Endothelial cell of umbilical vein (primary cell): ENCODE measurements at regions of chr1 and their contacts with region 1.

Region 1: DNA sequence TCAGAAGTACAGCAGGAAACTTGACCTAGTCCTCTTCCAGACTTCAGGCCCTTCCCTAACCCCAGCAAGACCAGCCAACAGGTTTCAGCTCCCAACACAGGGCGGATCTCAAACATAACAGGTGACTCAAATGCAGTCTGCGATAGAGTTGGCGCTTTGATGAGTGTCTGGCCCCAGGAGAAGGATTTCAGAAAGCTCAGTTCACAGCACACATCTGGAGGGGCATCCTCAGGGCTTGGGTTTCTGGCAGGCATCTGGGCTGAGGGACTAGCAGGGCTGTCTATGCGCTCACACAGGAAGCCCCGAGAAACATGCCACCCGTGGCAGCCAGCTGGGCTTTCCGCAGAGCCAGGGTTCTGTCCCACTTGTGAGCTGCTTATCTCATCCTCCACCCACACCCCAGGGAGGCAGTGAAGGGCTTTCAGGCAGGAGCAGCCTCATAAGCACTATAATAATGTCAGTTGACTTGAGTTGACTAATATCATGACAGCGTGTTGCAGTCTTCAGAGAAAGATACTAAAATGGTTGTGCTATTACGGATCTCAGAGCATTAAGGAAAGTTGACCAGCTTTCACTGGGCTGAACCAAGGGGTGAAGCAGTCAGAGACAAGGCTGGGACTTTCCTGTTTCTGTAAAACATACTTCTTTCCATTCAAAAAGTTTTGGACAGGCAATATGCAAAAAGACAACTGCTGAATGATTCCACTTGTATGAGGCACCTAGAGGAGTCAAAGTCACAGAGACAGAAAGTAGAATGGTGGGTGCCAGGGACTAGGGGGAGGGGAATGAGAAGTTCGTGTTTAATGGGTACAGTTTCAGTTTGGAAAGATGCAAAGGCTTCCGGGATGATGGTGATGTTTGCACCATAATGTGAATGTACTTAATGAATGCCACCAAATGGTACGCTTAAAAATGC is 233.0 kb upstream of the IRF2BP2 start:
- DNase-seq: no peak
- H3K4me3 ChIP-seq: no peak overlapping the region
- H3K27ac ChIP-seq: no peak overlapping the region
- H3K4me1 ChIP-seq: peaks cover 17% of the 10 kb centered on the region
- H3K27me3 ChIP-seq: no peaks in the 10 kb centered on the region
- CTCF ChIP-seq: no peak
- POLR2A ChIP-seq: no peak

Region 2: GRCh38 chr1:234599617-234600417 is 243.2 kb before region 1 on chr1:
- CTCF ChIA-PET with region 1: interaction called, 3 read pairs
- POLR2A ChIA-PET with region 1: no interaction called
- dilution Hi-C with region 1: no loop called
- intact Hi-C with region 1: loop called (anchors 2 kb)
- DNase-seq: peak; percentile 92
- H3K4me3 ChIP-seq: peak overlapping the region; percentile 18 to 53 (median 32)
- H3K27ac ChIP-seq: peak overlapping the region; percentile 87
- H3K4me1 ChIP-seq: peaks cover 50% of the 10 kb centered on the region
- H3K27me3 ChIP-seq: no peaks in the 10 kb centered on the region
- CTCF ChIP-seq: peak in 1 of 2 donors; percentile 3
- POLR2A ChIP-seq: no peak

Region 3: DNA sequence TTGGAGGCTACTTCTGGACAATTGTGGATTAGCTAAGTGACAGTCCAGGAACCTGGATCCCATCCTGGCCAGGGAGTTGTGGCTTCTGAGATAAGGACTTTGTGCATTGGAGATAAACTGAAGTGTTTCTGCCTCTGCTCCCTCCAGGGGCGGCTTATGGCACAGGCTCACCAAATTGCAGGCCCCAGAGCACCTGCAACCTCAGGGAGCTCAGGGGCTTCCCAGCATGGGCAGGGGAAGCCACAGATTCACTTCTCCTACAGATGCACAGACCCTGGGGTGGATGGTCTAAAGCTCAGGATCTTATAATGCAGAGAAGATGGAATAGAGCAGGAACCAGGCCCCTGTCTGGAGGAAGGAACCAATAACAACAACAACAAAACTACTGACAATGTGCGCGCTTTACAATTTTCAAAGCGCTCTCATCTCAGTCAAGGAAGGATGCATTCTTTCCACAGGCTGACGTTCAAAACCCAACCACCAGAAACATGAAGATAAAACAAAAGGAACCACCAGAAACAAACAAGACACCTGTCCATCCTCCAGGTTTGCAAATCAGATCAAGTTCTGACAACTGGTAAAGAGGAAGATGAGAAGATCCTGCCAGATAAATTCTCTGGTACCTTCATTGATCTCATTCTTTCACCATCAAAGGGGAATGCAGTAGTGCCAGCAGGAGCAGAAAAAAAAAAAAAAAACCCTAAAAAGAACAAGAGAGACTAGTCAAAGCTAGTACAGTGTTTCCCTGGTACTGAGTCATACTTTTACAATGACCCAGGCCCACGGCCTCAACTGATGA is 112.0 kb before region 1 on chr1:
- CTCF ChIA-PET with region 1: no interaction called
- POLR2A ChIA-PET with region 1: no interaction called
- dilution Hi-C with region 1: loop called (anchors 25 kb)
- intact Hi-C with region 1: no loop called
- DNase-seq: no peak
- H3K4me3 ChIP-seq: no peak overlapping the region
- H3K27ac ChIP-seq: no peak overlapping the region
- H3K4me1 ChIP-seq: peaks cover 24% of the 10 kb centered on the region
- H3K27me3 ChIP-seq: no peaks in the 10 kb centered on the region
- CTCF ChIP-seq: no peak
- POLR2A ChIP-seq: no peak

Region 4: GRCh38 chr1:234823191-234824176 is 19.5 kb before region 1 on chr1:
- CTCF ChIA-PET with region 1: no interaction called
- POLR2A ChIA-PET with region 1: no interaction called
- dilution Hi-C with region 1: no loop called
- intact Hi-C with region 1: no loop called
- DNase-seq: no peak
- H3K4me3 ChIP-seq: no peak overlapping the region
- H3K27ac ChIP-seq: no peak overlapping the region
- H3K4me1 ChIP-seq: no peaks in the 10 kb centered on the region
- H3K27me3 ChIP-seq: peaks cover 6 to 8% of the 10 kb centered on the region in 2 experiments
- CTCF ChIP-seq: no peak
- POLR2A ChIP-seq: no peak

Region 5: DNA sequence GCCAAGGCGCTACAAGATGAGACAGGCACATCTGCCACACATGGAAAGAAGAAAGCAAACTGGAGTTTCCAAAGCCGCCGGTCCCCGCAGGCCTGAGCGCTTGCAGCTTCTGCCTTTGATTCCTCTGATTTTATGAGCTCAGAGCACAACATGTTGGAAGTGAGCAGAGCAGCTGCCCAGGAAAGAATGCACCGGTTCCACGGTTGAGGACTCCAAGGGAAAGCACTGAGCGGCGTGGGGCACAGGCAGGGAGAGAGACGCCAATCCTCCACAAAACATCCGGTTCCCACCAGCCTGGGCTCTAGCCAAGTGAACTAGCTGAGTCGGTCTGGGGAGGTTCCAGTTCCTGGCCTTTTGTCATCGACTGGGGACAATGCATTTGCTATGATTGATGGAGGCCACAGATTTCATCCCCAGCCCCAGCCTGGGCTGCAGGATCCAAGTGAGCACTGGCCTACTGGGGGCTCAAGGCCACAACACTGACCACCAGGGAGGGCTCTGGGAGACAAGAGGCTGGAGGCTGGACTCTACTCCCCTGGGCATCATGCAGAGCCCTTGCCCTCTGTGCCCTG is 20.0 kb after region 1 on chr1:
- CTCF ChIA-PET with region 1: interaction called, 9 read pairs
- POLR2A ChIA-PET with region 1: no interaction called
- dilution Hi-C with region 1: no loop called
- intact Hi-C with region 1: loop called (anchors 2 kb)
- DNase-seq: peak; percentile 96
- H3K4me3 ChIP-seq: no peak overlapping the region
- H3K27ac ChIP-seq: peak overlapping the region; percentile 85
- H3K4me1 ChIP-seq: peaks cover 46% of the 10 kb centered on the region
- H3K27me3 ChIP-seq: no peaks in the 10 kb centered on the region
- CTCF ChIP-seq: no peak
- POLR2A ChIP-seq: no peak

Region 6: DNA sequence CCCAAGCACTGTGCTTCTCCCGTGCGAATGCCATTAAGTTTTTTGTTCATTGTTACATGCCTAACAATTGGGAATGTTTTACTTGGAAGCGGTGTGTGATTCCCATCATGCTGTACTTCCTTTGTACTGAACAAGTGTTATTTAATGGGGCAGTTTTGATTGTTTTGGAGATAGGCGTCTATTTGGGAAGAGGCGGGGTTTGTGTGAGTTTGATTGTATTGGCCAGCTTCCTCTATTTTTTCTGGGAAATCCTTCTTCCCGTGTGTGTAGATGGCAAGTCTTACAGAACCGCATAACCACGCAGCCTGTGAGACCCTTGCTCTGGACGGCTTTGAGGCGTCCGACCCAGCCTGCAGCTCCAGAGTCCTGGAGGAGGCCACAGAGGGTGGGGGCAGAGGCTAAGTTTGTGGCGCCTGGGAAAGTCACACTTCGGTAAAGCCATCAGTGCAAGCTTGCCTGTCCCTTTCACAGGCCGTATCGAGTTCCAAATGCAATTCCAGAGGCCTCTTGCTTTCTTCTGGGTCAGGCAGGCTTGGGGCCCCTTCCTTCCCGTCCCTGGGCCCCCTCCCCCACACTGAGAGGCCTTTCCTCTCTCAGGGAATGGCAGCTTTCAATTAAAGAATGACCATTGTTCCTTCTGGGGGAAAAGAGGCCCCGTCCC is 75.3 kb after region 1 on chr1:
- CTCF ChIA-PET with region 1: no interaction called
- POLR2A ChIA-PET with region 1: no interaction called
- dilution Hi-C with region 1: no loop called
- intact Hi-C with region 1: loop called (anchors 1 kb)
- DNase-seq: peak; percentile 99
- H3K4me3 ChIP-seq: no peak overlapping the region
- H3K27ac ChIP-seq: peak overlapping the region; percentile 95
- H3K4me1 ChIP-seq: peaks cover 40% of the 10 kb centered on the region
- H3K27me3 ChIP-seq: no peaks in the 10 kb centered on the region
- CTCF ChIP-seq: no peak
- POLR2A ChIP-seq: peak; percentile 77

Region 7: GRCh38 chr1:234978397-234979295 is 135.7 kb after region 1 on chr1:
- CTCF ChIA-PET with region 1: no interaction called
- POLR2A ChIA-PET with region 1: interaction called, 3 read pairs
- dilution Hi-C with region 1: no loop called
- intact Hi-C with region 1: loop called (anchors 1 kb)
- DNase-seq: peak; percentile 86
- H3K4me3 ChIP-seq: no peak overlapping the region
- H3K27ac ChIP-seq: peak overlapping the region; percentile 88
- H3K4me1 ChIP-seq: peaks cover 69% of the 10 kb centered on the region
- H3K27me3 ChIP-seq: no peaks in the 10 kb centered on the region
- CTCF ChIP-seq: no peak
- POLR2A ChIP-seq: no peak